Transverse colon (tissue), 4 donors: ENCODE measurements at regions of chr20 and their contacts with region 1.

Region 1: GRCh38 chr20:50092436-50092835 is 20.5 kb downstream of the UBE2V1 start:
- DNase-seq: no peak
- H3K4me3 ChIP-seq: no peak overlapping the region
- H3K27ac ChIP-seq: peak overlapping the region in 3 of 4 donors; percentile 35 to 57 (median 36)
- H3K4me1 ChIP-seq: peaks cover 0 to 16% (median 2%) of the 10 kb centered on the region in 4 donors
- H3K27me3 ChIP-seq: no peaks in the 10 kb centered on the region
- CTCF ChIP-seq: no peak
- EP300 ChIP-seq: no peak
- POLR2A ChIP-seq: no peak

Region 2: DNA sequence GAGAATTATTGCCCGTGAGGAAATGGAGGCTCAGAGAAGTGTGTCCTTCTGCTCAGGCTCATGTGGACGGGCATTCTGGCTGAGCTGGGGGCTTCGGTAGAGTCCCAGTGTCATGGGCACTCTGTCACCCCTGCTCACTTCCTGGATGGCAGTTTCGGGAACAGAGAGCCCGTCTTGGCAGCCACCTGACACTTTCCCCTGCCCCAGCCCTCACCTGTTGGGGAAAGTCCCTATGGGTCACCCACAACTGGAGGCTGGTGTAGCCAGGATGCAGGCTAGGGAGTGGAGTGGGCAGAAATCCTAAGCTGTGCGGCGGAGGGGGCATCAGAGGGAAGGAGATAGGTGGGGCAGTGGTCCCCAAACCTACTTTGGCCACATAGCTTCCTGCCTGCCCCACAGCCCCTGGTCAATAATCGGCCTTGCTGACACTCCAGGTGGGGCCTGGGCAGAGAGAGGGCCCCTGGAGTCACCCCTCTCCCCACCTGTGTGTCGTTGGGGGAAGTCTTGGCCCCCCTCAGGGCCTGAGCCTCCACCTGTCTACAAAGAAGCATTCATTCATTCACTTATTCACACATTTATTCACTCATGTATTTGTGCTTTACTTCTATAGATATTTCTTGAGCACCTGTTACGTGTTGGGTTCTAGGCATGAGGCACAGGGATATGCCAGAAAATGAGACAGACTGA is 69.2 kb before region 1 on chr20:
- in situ Hi-C with region 1: no loop called
- intact Hi-C with region 1: loop called (anchors 2 kb)
- DNase-seq: peak; percentile 23
- H3K4me3 ChIP-seq: no peak overlapping the region
- H3K27ac ChIP-seq: no peak overlapping the region
- H3K4me1 ChIP-seq: no peaks in the 10 kb centered on the region
- H3K27me3 ChIP-seq: no peaks in the 10 kb centered on the region
- CTCF ChIP-seq: no peak
- EP300 ChIP-seq: no peak
- POLR2A ChIP-seq: no peak